ENCODE measurements at regions of chr18 and their contacts with region 1.

Region 1: GRCh38 chr18:23515911-23516546 is 12.7 kb downstream of the RMC1 start:
- DNase-seq: peak; percentile 81
- H3K4me3 Mint-ChIP-seq: no peak overlapping the region
- H3K27ac Mint-ChIP-seq: peak overlapping the region; percentile 46
- H3K4me1 Mint-ChIP-seq: peaks cover 36% of the 10 kb centered on the region
- H3K27me3 Mint-ChIP-seq: no peaks in the 10 kb centered on the region

Region 2: GRCh38 chr18:23504720-23505119 is 11.3 kb before region 1 on chr18:
- CTCF ChIA-PET with region 1: interaction called, 11 read pairs
- POLR2A ChIA-PET with region 1: no interaction called
- DNase-seq: peak; percentile 45
- H3K4me3 Mint-ChIP-seq: peak overlapping the region; percentile 86
- H3K27ac Mint-ChIP-seq: peak overlapping the region; percentile 94
- H3K4me1 Mint-ChIP-seq: peaks cover 47% of the 10 kb centered on the region
- H3K27me3 Mint-ChIP-seq: no peaks in the 10 kb centered on the region

Region 3: DNA sequence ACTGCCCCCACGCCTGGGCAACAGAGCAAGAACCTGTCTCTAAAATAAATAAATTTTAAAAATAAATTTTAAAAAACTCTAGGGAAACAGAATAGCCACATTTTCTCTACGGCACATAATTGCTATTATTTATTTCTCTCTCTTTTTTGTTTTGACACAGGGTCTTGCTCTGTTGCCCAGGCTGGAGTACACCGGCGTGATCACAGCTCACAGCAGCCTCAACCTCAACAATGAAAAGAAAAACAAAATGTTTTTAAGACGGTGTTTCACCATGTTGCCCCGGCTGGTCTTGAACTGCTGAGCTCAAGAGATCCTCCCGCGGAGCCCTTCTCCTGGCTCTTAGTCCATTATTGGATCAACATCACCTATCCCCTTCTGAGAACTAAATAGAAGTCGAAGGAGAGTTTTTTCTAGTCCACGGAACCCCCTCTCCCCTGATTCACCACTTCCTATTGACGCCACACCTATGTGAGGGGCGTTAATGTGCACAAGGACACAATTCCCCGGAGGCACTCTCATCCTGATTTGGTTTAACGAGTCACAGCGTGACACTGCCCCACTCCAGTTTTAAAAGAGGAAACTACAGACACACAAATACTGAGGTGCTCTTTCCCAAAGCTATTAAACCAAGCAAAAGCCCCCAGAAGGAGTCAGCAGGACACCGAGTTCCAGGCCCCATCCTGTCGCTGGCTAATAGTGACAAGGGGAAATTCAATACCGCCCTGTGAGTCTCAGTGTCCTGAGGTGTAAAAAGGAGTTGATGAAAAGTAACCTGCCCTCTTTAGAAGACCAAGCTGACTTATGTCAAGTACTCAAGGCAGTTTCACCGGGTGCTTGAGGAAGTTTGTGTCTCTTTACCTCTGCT is 69.2 kb after region 1 on chr18:
- CTCF ChIA-PET with region 1: interaction called, 17 read pairs
- POLR2A ChIA-PET with region 1: no interaction called
- DNase-seq: peak; percentile 12
- H3K4me3 Mint-ChIP-seq: peak overlapping the region; percentile 93
- H3K27ac Mint-ChIP-seq: peak overlapping the region; percentile 94
- H3K4me1 Mint-ChIP-seq: peaks cover 45% of the 10 kb centered on the region
- H3K27me3 Mint-ChIP-seq: peaks cover 4% of the 10 kb centered on the region

Measured in activated CD4-positive, alpha-beta T cell treated with anti-CD3 and anti-CD28 coated beads, Interleukin-2, amount 10 ng/mL, durations not matched to agents 7 days and 5 days (primary cell).